ENCODE measurements at regions of chr17 and their contacts with region 1.

Region 1: DNA sequence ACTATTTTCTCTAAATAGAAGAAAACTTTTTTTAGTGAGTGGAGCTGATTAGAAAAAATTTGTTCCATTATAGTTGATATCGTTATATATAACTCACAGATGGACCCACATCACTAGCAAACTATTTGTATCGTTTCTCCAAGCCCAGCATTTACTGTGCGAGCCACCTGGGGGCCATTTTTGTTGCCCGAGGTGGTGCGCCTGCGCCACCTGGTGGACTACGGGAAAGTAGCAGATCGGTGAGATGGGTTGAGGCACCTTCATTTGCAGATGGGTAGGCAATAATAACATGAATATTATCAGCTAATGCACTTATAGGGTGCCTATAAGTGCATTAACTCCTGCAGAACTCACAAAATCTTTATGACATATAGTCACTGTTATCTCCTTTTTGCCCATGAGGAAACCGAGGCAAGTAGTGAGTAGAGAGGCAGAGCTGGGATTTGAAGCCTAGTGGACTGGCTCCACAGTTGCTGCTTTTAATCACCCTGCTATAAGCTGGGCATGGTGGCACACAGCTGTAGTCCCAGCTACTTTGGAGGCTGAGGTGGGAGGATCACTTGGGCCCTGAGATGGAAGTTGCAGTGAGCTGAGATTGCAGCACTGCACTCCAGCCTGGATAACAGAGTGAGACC is 23.2 kb upstream of the NTN1 start:
- DNase-seq: peak; percentile 85
- H3K4me3 Mint-ChIP-seq: no peak overlapping the region
- H3K27ac Mint-ChIP-seq: no peak overlapping the region
- H3K4me1 Mint-ChIP-seq: peaks cover 5% of the 10 kb centered on the region
- H3K27me3 Mint-ChIP-seq: peaks cover 16% of the 10 kb centered on the region

Region 2: DNA sequence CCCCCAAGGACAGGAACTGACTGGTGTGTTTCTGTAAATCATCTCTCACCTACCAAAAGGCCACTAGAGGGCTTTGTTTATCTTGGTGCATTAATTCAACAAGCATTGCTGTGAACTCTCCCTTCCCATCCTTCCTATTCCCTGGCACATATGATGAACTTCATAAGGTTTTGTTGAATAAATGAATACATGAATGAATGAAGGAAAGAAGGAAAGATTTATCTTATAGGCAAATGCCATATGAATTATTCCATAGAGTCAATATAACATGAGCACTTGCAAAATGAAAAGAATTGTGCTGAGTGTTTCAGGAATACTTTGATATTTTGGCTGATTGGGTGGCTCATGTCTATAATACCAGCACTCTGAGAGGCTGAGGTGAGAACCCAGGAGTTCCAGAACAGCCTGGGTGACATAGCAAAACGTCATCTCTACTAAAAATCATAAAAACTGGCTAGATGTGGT is 244.1 kb before region 1 on chr17:
- CTCF ChIA-PET with region 1: interaction called, 7 read pairs
- intact Hi-C with region 1: loop called (anchors 1 kb)
- DNase-seq: no peak
- H3K4me3 Mint-ChIP-seq: no peak overlapping the region
- H3K27ac Mint-ChIP-seq: no peak overlapping the region
- H3K4me1 Mint-ChIP-seq: no peaks in the 10 kb centered on the region
- H3K27me3 Mint-ChIP-seq: peaks cover 4% of the 10 kb centered on the region

Region 3: DNA sequence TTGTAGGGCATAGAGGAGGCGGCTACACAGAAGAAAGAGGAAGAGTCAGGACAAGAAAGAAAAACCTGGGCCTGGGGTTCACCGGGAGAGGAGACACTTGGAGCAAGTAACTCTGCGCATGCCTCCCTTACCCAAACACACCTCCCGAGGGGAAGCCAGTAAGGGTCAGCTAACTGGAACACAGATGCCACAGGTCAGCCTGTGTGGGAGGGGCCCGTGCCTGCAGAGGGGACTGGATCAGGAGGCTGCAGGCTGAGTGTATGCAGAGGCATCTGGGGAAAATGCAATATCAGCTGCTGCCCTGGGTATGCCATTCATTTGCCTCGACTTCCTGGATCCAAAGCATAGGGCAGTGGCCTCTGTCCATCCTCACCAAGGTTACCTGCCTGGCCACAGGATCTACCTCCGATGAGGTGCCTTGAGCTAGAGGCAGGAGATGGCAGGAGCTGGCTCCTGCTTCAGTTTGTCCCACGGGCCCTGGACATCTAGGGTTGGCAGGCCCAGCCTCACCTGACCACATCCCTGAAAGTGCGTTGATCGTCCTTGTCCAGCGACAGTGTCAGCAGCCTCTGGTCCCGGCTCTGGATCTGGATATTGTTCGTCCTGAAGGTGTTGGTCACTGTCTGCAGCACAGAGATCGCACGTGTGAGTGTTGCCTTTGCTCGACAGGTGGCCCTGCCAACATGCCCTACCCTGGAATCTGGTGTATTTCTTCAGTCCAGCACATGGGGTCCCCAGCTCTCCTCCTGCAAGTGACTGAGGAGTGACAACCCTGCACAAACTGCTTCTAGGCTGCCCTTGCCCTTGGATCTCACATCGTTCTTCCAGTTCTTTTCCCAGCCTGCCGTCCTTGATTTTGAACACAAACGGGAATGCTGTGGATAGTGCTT is 194.3 kb before region 1 on chr17:
- CTCF ChIA-PET with region 1: interaction called, 7 read pairs
- intact Hi-C with region 1: loop called (anchors 5 kb)
- DNase-seq: peak; percentile 18
- H3K4me3 Mint-ChIP-seq: no peak overlapping the region
- H3K27ac Mint-ChIP-seq: no peak overlapping the region
- H3K4me1 Mint-ChIP-seq: no peaks in the 10 kb centered on the region
- H3K27me3 Mint-ChIP-seq: no peaks in the 10 kb centered on the region

Region 4: DNA sequence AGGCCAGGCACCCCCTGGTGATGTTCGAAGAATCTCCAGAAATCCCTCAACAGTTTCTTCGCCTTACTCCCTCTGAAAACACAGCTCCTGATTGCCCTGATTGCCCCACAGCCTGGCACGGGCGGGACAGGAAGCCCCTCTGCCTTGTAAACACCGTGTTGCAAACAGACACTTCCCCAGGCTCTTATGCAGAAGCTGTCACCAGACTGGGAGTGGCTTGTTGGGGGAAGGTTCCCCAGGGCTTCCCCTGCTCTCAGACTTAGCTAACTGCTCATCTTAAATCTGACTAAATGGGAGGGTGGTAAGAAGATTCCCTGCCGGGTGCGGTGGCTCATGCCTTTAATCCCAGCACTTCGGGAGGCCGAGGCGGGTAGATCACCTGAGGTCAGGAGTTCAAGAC is 43.8 kb before region 1 on chr17:
- CTCF ChIA-PET with region 1: interaction called, 14 read pairs
- intact Hi-C with region 1: no loop called
- DNase-seq: peak; percentile 92
- H3K4me3 Mint-ChIP-seq: peak overlapping the region; percentile 25
- H3K27ac Mint-ChIP-seq: peak overlapping the region; percentile 83
- H3K4me1 Mint-ChIP-seq: peaks cover 95% of the 10 kb centered on the region
- H3K27me3 Mint-ChIP-seq: no peaks in the 10 kb centered on the region

Region 5: GRCh38 chr17:9028202-9028987 is 30.3 kb after region 1 on chr17:
- CTCF ChIA-PET with region 1: interaction called, 10 read pairs
- intact Hi-C with region 1: no loop called
- DNase-seq: no peak
- H3K4me3 Mint-ChIP-seq: no peak overlapping the region
- H3K27ac Mint-ChIP-seq: no peak overlapping the region
- H3K4me1 Mint-ChIP-seq: peaks cover 2% of the 10 kb centered on the region
- H3K27me3 Mint-ChIP-seq: peaks cover 51% of the 10 kb centered on the region

Measured in activated naive CD4-positive, alpha-beta T cell treated with anti-CD3 and anti-CD28 coated beads for 36 hours (primary cell).